Prostate gland (tissue), 2 donors: ENCODE measurements at regions of chr19 and their contacts with region 1.

Region 1: GRCh38 chr19:35545001-35545911 is at the start of gene TMEM147:
- DNase-seq: peak; percentile 91
- H3K4me3 ChIP-seq: peak within 1 kb of the TSS; percentile 55 to 80
- H3K27ac ChIP-seq: peak within 1 kb of the TSS; percentile 60 to 72
- H3K4me1 ChIP-seq: peaks cover 6% of the 10 kb centered on the region
- H3K27me3 ChIP-seq: no peaks in the 10 kb centered on the region
- CTCF ChIP-seq: no peak
- POLR2A ChIP-seq: no peak
- total RNA-seq, gene TMEM147: 105 to 120 TPM

Region 2: DNA sequence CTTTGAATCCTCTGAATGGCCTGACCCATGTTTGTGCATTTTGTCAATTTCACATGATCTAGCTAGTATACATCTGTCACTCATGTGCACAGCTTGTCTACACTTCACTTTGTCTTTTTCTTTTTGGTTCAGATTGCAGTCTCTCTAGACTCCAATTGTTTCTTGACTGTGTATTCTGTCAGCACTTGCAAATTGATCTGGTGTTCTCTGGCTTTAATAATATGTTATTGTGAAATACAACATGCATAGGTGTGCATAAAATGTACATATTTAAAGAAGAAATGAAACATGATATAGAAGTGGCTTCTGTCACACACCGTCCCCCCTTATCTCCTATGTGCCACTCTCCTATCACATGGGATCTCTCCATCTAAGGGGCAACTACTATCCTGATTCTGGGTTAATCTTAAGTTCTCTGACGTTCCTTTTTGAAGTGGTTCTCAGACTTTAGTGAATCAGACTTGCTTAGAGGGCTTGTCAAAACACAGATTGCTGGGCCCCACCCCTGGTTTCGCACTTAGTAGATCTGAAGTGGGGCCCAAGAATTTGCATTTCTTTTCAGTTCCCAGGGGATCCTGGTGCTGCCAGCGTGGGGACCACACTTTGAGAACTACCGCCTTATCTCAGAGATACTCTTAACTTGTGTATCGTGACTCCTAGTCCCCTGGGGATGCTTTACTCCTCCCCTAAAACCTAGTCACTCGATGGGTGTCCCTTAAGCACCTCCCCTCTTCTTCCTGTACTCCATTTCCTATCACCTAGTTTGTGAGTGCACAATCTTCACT is 60.8 kb before region 1 on chr19:
- intact Hi-C with region 1: no loop called
- DNase-seq: no peak
- H3K4me3 ChIP-seq: no peak overlapping the region
- H3K27ac ChIP-seq: no peak overlapping the region
- H3K4me1 ChIP-seq: no peaks in the 10 kb centered on the region
- H3K27me3 ChIP-seq: no peaks in the 10 kb centered on the region
- CTCF ChIP-seq: no peak
- POLR2A ChIP-seq: no peak

Region 3: DNA sequence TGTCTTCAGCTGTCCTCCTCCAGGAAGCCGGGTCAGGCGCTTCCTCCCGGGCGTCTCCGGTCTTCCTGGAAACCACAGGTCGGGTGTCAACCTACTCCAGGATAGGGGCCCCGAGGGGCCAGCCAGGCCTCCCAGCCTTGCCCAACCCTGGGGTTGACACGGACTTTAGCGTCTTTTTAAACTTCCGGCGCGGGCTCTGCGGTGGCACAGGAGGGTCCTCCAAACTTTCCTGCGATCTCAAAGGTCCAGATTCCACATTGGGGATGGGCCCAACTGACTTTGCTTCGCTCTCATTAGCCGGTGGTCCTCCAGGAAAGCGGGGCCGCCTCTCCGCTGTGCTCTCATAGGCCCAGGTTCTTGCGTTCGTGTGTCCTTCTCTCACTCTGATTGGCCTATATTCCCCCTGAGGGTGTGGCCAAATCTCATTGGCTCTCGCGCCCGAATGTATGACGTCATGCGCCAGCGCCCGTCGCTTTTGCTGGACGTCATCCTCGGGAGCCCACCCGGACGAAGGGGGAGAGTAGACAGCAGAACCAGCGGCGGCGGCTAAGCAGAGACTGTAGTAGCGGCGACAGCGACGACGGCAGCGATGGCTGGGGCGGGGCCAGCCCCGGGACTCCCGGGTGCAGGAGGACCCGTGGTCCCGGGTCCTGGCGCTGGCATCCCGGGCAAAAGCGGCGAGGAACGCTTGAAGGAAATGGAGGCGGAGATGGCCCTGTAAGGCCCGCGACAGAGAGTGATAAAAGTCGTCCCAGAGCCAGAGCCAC is 83.5 kb after region 1 on chr19 and contains the start of gene RBM42:
- intact Hi-C with region 1: loop called (anchors 5 kb)
- DNase-seq: peak; percentile 96
- H3K4me3 ChIP-seq: peak within 1 kb of the TSS; percentile 98 to 99
- H3K27ac ChIP-seq: peak within 1 kb of the TSS; percentile 88
- H3K4me1 ChIP-seq: no peaks in the 10 kb centered on the region
- H3K27me3 ChIP-seq: no peaks in the 10 kb centered on the region
- CTCF ChIP-seq: peak in 1 of 4 experiments; percentile 41
- POLR2A ChIP-seq: peak; percentile 43
- total RNA-seq, gene RBM42: 81.4 to 114 TPM

Region 4: DNA sequence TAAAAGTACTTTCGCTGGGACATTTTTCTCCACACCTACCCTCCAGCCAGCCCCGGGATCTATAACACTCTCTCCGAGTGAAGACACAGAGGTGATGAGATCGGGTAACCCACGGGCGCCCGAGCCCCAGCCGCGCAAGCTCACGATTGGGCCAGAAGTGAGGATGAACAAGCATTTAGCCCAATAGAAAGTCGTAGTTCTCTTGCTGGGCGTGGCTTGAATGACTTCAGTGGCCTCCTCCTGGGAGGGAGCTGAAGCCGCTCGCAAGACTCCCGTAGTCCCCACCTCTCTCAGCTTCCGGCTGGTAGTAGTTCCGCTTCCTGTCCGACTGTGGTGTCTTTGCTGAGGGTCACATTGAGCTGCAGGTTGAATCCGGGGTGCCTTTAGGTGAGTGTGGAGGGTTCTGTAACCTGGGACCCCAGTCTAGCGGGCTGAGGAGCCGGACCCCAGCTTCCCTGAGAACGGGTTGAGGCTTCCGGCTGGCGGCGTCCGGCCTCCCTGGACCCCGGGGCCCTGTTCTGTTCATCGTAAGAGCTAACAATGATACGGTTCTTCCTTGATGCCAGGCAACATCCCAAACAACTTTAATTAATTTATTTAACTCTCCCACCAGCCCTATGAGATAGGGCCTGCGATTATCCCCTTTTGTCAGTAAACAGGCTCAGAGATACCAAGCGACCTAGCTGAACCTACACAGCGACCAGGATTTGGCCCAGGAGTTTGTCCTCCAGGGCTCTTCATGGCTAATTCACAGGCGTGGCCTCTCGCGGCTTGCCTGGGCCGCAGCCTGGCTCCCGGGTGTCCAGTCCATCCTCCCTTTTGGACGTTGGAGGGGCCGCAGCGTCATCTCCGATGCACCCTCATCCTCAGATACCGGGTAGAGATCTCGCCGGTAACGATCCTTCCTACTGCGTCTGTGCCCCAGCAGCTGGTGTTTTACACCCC is 103.0 kb after region 1 on chr19 and contains the start of gene COX6B1:
- intact Hi-C with region 1: loop called (anchors 5 kb)
- DNase-seq: peak; percentile 96
- H3K4me3 ChIP-seq: peak within 1 kb of the TSS; percentile 44 to 61
- H3K27ac ChIP-seq: peak within 1 kb of the TSS; percentile 73 to 78
- H3K4me1 ChIP-seq: no peaks in the 10 kb centered on the region
- H3K27me3 ChIP-seq: no peaks in the 10 kb centered on the region
- CTCF ChIP-seq: peak in 1 of 4 experiments; percentile 12
- POLR2A ChIP-seq: peak; percentile 73
- total RNA-seq, gene COX6B1: 334 to 665 TPM

Region 5: DNA sequence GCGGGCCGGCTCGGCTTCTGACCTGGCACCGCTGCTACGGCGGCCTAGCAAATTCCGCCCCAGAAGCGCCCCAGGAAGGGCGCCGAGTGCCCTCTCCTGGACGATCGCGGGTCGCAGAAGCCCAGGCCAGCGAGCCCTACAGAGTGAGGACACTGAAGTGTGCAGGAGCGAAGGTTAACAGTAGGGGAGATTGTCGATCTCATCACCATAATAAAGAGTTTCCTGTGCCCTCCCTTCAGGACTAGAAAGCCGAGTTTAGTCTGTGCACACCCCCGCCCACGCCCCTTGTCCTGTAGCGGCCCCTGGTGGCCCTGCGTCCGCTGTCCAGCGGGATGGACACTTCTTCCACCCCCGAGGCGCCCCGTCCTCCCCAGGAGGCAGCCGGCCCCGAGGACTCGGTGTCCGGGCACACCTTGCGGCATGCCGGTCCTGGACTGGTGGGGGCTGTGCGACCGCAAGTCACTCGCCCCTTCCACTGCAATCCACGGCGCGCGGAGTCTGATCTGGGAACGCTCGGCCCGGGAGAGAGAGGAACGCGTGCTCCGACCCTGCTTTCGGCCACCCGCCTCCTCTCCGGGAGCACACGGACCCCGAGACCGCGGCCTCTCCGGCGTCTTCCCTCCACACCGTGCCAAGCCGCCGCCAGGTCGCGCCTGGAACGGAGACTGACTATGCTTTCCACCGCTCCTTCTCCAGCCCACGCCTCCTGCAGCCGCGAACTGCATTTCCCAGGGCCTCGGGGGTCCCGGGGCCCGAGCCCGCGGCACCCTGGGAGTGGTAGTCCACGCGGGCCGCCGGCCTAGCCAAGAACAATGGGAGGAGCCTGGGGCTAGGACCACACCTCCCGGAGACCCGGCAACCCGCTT is 171.8 kb after region 1 on chr19:
- intact Hi-C with region 1: loop called (anchors 2 kb)
- DNase-seq: peak; percentile 95
- H3K4me3 ChIP-seq: peak overlapping the region; percentile 91 to 93
- H3K27ac ChIP-seq: peak overlapping the region; percentile 69 to 91
- H3K4me1 ChIP-seq: peaks cover 15% of the 10 kb centered on the region
- H3K27me3 ChIP-seq: no peaks in the 10 kb centered on the region
- CTCF ChIP-seq: peak; percentile 76 to 96 (median 90)
- POLR2A ChIP-seq: peak; percentile 22